Right lobe of liver (tissue), 6 donors: ENCODE measurements at regions of chr14 and their contacts with region 1.

Region 1: DNA sequence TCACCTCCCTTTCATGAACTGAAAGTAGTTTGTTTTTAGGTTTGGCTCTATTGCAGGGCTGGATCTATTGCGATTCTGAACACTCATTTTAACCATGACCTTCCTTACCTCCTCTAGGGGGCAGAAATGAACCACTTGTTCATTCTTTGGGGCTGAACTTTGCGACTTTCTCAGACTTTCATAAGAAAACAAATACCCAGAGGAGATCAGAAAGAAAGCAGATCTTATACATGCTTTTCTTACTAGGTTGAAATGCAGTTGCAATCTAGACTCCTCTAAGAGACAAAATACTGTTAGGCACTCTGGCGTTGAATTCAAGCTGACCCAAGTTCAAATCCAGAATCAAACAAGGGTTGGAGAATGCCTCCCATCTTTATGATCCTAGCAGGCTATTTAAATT is 32.6 kb upstream of the PLEKHG3 start:
- DNase-seq: no peak
- ATAC-seq: peak; percentile 80 to 87 (median 84)
- H3K4me3 ChIP-seq: no peak overlapping the region
- H3K27ac ChIP-seq: no peak overlapping the region
- H3K4me1 ChIP-seq: peaks cover 0 to 12% (median 0%) of the 10 kb centered on the region in 4 donors
- H3K27me3 ChIP-seq: no peaks in the 10 kb centered on the region
- CTCF ChIP-seq: peak; percentile 68 to 87 (median 75)
- POLR2A ChIP-seq: no peak

Region 2: GRCh38 chr14:64012720-64013119 is 658.9 kb before region 1 on chr14:
- intact Hi-C with region 1: no loop called
- DNase-seq: no peak
- ATAC-seq: no peak
- H3K4me3 ChIP-seq: no peak overlapping the region
- H3K27ac ChIP-seq: no peak overlapping the region
- H3K4me1 ChIP-seq: no peaks in the 10 kb centered on the region
- H3K27me3 ChIP-seq: no peaks in the 10 kb centered on the region
- CTCF ChIP-seq: no peak
- POLR2A ChIP-seq: no peak

Region 3: GRCh38 chr14:64758691-64759584 is 87.3 kb after region 1 on chr14:
- intact Hi-C with region 1: loop called (anchors 5 kb)
- DNase-seq: peak in 1 of 3 donors; percentile 38
- ATAC-seq: no peak
- H3K4me3 ChIP-seq: no peak overlapping the region
- H3K27ac ChIP-seq: no peak overlapping the region
- H3K4me1 ChIP-seq: no peaks in the 10 kb centered on the region
- H3K27me3 ChIP-seq: no peaks in the 10 kb centered on the region
- CTCF ChIP-seq: no peak
- POLR2A ChIP-seq: no peak

Region 4: DNA sequence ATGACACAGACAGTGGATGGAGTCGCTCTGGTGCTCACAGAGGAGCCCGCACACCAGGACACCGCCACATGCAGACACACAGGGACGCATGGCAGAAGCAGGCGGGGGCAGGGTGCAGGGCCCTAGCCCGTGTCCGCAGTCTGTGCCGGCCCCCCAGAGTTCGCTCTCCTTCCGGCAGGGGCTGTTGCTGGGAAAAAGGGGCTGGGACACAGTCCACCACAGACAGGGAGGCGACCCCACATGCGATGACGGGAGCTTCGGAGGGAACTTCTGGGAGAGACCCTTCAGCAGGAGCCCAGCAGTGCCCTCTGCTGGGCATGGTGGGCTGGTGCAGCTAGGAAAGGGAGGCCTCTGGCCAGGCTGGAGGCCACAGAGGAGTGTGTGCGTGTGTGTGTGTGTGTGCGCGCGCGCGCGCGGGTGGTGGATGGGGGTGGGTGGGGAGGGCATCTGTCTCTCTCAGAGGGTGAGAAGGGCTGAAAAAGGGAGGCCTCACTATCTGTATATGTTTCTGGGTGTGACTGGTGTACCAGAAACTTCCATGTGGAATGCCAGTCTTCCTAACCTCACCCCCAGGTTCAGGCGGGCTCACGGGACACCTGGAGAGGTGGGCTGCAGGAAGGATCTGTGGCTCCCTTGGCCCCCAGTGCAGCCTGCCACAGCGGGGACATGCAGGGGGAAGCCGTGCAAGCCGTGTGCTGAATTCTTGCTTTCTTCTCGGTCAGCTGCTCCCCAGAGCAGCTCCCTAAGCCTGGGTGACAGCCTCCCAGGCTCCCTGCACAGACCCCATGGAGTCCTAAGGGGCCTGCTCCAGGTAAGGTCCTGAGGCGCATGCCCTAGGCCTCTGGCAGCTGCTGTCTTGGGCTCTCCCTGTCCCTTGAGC is 93.3 kb after region 1 on chr14:
- intact Hi-C with region 1: loop called in 1 of 2 experiments (anchors 5 kb)
- DNase-seq: peak; percentile 66 to 77 (median 71)
- ATAC-seq: peak; percentile 84 to 91 (median 84)
- H3K4me3 ChIP-seq: peak overlapping the region in 2 of 3 donors; percentile 21 to 31
- H3K27ac ChIP-seq: no peak overlapping the region
- H3K4me1 ChIP-seq: no peaks in the 10 kb centered on the region
- H3K27me3 ChIP-seq: no peaks in the 10 kb centered on the region
- CTCF ChIP-seq: peak; percentile 84 to 90 (median 88)
- POLR2A ChIP-seq: no peak